Activated naive CD4-positive, alpha-beta T cell treated with anti-CD3 and anti-CD28 coated beads for 36 hours (primary cell): ENCODE measurements at regions of chr20 and their contacts with region 1.

Region 1: GRCh38 chr20:45971675-45972499 is at the start of gene ZNF335:
- DNase-seq: peak; percentile 93
- H3K4me3 Mint-ChIP-seq: peak within 1 kb of the TSS; percentile 93
- H3K27ac Mint-ChIP-seq: peak within 1 kb of the TSS; percentile 100
- H3K4me1 Mint-ChIP-seq: peaks cover 16% of the 10 kb centered on the region
- H3K27me3 Mint-ChIP-seq: no peaks in the 10 kb centered on the region
- total RNA-seq, gene ZNF335: 26.8 to 28.0 TPM

Region 2: DNA sequence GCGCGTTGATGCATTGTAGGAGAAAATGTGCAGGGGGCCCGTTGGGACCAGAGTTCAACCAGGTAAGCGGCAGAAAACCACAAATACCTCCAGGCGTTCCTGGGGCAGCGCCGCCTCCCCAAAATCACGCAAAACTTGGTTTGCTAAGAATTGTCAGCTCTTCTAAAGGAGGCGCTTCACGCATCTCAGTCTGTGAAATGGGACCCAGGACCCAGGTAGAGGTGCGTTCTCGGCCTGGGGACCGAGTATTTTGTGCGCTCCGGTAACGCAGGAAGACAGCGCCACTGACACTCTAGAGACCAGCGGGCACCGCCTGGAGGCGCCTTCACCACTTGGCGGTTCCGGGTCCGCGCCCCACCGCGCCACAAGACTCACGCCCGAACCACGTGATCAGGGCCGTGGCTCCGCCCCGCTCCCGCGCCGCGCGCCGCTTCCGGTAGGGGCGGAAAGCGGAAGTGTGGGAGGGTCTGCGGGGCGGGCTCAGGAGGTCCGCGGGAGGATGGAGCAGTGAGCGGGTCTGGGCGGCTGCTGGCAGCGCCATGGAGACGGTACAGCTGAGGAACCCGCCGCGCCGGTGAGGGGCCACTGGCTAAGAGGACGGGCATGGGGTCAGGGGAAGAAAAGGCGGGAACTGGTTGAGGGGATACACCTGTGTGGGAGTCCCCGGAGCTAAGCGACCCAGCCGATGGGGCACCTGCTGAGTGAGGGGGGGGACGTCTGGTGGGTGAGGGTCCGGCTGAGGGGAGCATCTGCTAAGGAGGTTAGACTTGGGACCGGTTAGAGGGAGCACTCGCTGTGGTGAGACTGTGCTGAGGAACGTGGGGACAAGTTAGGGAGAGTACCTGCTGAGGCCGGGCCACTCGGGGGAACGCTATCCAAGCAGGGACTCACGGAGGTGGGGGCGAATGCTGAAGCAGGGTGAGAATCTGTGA is 1005.6 kb before region 1 on chr20 and contains the start of gene STK4:
- CTCF ChIA-PET with region 1: no interaction called
- intact Hi-C with region 1: loop called (anchors 5 kb)
- DNase-seq: peak; percentile 96
- H3K4me3 Mint-ChIP-seq: peak within 1 kb of the TSS; percentile 88
- H3K27ac Mint-ChIP-seq: peak within 1 kb of the TSS; percentile 98
- H3K4me1 Mint-ChIP-seq: peaks cover 56% of the 10 kb centered on the region
- H3K27me3 Mint-ChIP-seq: no peaks in the 10 kb centered on the region
- total RNA-seq, gene STK4: 110 to 116 TPM

Region 3: DNA sequence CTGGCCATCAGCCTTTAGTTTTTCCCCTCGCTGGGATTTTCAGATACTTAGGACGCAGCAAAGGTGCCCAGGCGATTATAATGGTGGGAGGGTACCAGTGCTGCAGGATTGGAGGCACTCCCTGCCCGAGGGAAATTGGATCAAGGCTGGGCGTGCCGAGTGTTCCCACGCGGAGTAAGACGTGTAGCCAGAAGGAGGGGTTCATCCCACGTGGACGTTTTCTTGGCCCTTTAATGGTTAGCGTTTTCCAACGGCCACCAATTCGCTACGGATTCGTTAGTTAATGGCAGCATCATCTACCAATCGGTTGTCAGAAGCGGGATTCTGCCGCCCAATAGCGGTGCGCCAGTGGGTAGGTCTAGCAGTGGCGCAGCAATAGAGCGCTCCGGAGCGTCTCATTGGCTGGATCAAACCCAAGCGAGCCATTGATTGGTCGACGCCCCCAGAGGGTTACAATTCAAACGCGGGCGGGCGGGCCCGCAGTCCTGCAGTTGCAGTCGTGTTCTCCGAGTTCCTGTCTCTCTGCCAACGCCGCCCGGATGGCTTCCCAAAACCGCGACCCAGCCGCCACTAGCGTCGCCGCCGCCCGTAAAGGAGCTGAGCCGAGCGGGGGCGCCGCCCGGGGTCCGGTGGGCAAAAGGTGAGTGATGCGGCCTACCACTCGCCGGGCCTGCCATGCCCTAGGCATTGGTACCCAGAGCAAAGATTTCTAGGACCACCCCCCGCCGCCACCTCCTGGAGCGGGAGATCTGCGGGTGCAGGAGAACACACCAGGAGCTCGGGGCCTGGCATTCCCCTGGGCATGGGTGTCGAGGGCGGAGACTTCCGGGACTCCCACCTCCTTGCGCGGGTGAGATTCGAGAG is 159.5 kb before region 1 on chr20 and contains the start of gene UBE2C:
- CTCF ChIA-PET with region 1: no interaction called
- intact Hi-C with region 1: loop called (anchors 1 kb)
- DNase-seq: peak; percentile 98
- H3K4me3 Mint-ChIP-seq: peak within 1 kb of the TSS; percentile 94
- H3K27ac Mint-ChIP-seq: peak within 1 kb of the TSS; percentile 82
- H3K4me1 Mint-ChIP-seq: peaks cover 17% of the 10 kb centered on the region
- H3K27me3 Mint-ChIP-seq: no peaks in the 10 kb centered on the region
- total RNA-seq, gene UBE2C: 189 to 202 TPM

Region 4: GRCh38 chr20:45890985-45891983 is 80.6 kb before region 1 on chr20 and contains the starts of genes CTSA and NEURL2:
- CTCF ChIA-PET with region 1: interaction called, 5 read pairs
- intact Hi-C with region 1: loop called (anchors 1 kb)
- DNase-seq: peak; percentile 91
- H3K4me3 Mint-ChIP-seq: peak within 1 kb of the TSS; percentile 89
- H3K27ac Mint-ChIP-seq: peak within 1 kb of the TSS; percentile 84
- H3K4me1 Mint-ChIP-seq: peaks cover 22% of the 10 kb centered on the region
- H3K27me3 Mint-ChIP-seq: no peaks in the 10 kb centered on the region
- total RNA-seq, gene CTSA: 28.7 to 31.5 TPM
- total RNA-seq, gene NEURL2: 0.99 to 1.4 TPM

Region 5: GRCh38 chr20:45946149-45946970 is 25.5 kb before region 1 on chr20:
- CTCF ChIA-PET with region 1: interaction called, 29 read pairs
- intact Hi-C with region 1: no loop called
- DNase-seq: no peak
- H3K4me3 Mint-ChIP-seq: no peak overlapping the region
- H3K27ac Mint-ChIP-seq: no peak overlapping the region
- H3K4me1 Mint-ChIP-seq: peaks cover 10% of the 10 kb centered on the region
- H3K27me3 Mint-ChIP-seq: no peaks in the 10 kb centered on the region

Region 6: DNA sequence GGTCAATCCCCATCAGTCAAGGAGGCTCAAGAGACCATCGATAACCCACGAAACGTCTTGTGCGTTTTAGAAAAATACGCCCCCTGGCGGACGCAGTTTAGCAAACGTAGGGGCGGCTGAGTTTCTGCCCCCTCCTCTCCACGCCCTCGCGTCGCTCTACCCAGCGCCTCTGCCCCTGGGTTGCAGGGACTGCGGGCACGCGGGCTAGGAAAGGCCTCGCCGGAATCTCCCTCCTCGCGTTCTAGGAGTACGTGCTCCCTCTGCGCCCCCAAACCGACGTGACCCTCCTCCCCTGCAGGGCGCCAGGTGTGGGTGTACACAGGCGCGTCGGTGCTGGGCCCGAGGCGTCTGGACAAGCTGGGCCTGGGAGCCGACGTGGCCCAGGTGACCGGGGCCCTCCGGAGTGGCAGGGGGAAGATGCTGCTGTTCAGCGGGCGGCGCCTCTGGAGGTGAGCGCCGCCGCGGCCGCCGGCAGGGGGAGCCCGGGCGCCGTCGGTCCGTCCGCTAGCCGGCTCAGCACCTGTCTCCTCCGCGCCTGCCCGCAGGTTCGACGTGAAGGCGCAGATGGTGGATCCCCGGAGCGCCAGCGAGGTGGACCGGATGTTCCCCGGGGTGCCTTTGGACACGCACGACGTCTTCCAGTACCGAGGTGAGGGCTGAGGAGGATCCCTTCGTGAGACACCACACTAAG is 42.1 kb after region 1 on chr20:
- CTCF ChIA-PET with region 1: interaction called, 48 read pairs
- intact Hi-C with region 1: no loop called
- DNase-seq: peak; percentile 71
- H3K4me3 Mint-ChIP-seq: no peak overlapping the region
- H3K27ac Mint-ChIP-seq: no peak overlapping the region
- H3K4me1 Mint-ChIP-seq: peaks cover 36% of the 10 kb centered on the region
- H3K27me3 Mint-ChIP-seq: peaks cover 42% of the 10 kb centered on the region

Region 7: DNA sequence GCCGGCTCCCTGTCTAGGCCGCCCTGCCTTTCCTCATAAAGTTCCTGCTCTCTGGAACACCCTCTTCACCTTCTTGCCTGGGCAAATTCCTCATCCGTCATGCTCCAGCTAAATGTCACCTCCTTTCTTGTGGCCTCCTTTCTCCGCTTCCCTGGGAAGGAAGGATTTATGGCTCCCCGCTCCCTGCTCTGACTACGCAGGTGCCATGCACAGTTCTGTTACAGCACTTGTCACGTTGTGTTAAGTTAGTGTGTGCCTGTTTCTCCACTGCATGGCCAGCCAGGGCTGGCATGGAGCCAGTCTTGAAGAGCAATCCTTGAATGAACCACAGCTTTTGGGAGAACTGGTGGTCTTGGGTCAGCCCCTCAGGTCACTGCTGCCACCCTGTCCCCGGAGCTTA is 208.0 kb after region 1 on chr20:
- CTCF ChIA-PET with region 1: no interaction called
- intact Hi-C with region 1: no loop called
- DNase-seq: no peak
- H3K4me3 Mint-ChIP-seq: no peak overlapping the region
- H3K27ac Mint-ChIP-seq: no peak overlapping the region
- H3K4me1 Mint-ChIP-seq: no peaks in the 10 kb centered on the region
- H3K27me3 Mint-ChIP-seq: peaks cover 26% of the 10 kb centered on the region